BJ (cell line): ENCODE measurements at regions of chr20 and their contacts with region 1.

Region 1: GRCh38 chr20:49207076-49207475 is 12.1 kb upstream of the DDX27 start:
- DNase-seq: no peak
- H3K4me3 ChIP-seq: no peak overlapping the region
- H3K27me3 ChIP-seq: no peaks in the 10 kb centered on the region
- CTCF ChIP-seq: no peak

Region 2: DNA sequence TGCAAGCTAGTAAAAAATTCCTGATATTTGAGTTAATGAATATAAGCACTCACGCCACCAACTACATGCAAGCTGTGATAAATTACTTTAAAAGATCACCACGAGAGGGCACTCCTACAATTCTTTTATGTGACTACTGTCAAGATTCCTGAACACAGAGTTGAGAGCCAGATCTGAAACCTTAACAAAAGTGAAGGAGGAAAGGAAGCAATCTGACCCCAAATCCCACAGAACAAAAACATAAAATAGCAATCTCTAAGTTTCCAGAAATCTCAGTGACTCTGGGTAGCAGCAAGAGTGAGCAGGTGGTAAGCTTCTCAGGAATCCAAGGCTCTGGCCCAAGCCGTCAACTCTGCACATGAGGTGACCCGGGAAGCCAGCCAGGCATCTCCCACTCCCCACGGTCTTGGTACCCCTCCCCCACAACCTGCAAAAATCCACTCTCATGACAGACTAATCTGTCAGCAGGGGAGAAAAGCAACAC is 74.0 kb before region 1 on chr20:
- CTCF ChIA-PET with region 1: interaction called, 137 read pairs
- POLR2A ChIA-PET with region 1: no interaction called
- DNase-seq: peak; percentile 24
- H3K4me3 ChIP-seq: no peak overlapping the region
- H3K27me3 ChIP-seq: no peaks in the 10 kb centered on the region
- CTCF ChIP-seq: peak; percentile 46